Breast epithelium (tissue), 4 donors: ENCODE measurements at regions of chr11 and their contacts with region 1.

Region 1: GRCh38 chr11:126512741-126513715 is 157.5 kb downstream of the ST3GAL4 start:
- DNase-seq: no peak
- H3K4me3 ChIP-seq: no peak overlapping the region
- H3K27ac ChIP-seq: no peak overlapping the region
- H3K4me1 ChIP-seq: no peaks in the 10 kb centered on the region
- H3K27me3 ChIP-seq: no peaks in the 10 kb centered on the region
- CTCF ChIP-seq: no peak
- POLR2A ChIP-seq: no peak

Region 2: GRCh38 chr11:126434950-126435335 is 78.1 kb before region 1 on chr11:
- intact Hi-C with region 1: loop called (anchors 2 kb)
- DNase-seq: no peak
- H3K4me3 ChIP-seq: no peak overlapping the region
- H3K27ac ChIP-seq: no peak overlapping the region
- H3K4me1 ChIP-seq: no peaks in the 10 kb centered on the region
- H3K27me3 ChIP-seq: no peaks in the 10 kb centered on the region
- CTCF ChIP-seq: no peak
- POLR2A ChIP-seq: no peak

Region 3: DNA sequence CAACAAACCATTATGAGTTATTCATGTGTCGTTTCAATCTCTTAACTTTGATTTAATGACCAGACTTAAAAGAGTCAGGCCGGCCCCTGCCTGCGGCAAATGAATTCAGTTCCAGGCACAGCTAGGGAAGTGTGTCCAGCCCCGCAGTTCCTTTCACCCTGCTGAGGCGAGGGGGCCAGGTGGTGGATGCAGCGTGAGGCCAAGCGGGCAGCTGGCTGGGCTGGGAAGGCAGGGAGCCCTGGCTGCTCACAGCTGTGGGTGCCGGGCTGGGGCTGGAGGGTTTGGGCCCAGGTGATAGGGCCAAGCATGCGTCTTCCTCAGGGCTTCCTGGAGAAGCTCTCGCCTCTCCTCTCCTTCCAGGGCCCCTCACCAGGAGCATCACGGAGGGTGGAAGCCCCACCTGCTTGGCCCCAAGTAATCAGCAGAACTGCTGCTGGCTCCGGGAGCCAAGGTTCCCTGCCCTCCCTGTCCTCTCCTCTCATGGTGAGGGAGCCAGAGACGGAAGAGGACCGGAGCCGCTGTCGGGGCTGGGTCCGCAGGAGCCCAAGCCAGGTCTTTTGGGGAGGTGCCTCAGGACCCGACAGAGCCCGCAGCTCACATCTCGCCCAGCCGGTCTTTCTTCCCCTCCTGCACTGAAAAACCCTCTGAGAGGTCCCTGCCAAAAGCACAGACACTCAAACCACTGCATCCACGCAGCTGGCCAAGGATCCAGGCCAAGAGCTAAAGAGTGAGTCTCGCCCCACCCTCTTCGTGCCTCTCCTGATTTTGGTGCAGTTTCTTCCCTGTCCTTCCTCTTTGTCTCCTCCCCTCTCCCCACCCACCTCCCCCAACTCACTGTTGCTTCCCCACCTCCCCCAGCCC is 60.6 kb before region 1 on chr11:
- intact Hi-C with region 1: no loop called
- DNase-seq: no peak
- H3K4me3 ChIP-seq: peak overlapping the region in 1 of 3 donors; percentile 22
- H3K27ac ChIP-seq: no peak overlapping the region
- H3K4me1 ChIP-seq: no peaks in the 10 kb centered on the region
- H3K27me3 ChIP-seq: no peaks in the 10 kb centered on the region
- CTCF ChIP-seq: no peak
- POLR2A ChIP-seq: no peak